Naive thymus-derived CD4-positive, alpha-beta T cell (primary cell): ENCODE measurements at regions of chr19 and their contacts with region 1.

Region 1: GRCh38 chr19:53195265-53195903 is 2.2 kb upstream of the ZNF665 start:
- DNase-seq: peak; percentile 39 to 86 (median 77)
- ATAC-seq: peak; percentile 53
- H3K4me3 ChIP-seq: no peak overlapping the region
- H3K4me3 Mint-ChIP-seq: peak overlapping the region; percentile 4 to 93 (median 64)
- H3K27ac ChIP-seq: no peak overlapping the region
- H3K27ac Mint-ChIP-seq: peak overlapping the region; percentile 30 to 96 (median 64)
- H3K4me1 ChIP-seq: peaks cover 9% of the 10 kb centered on the region in 2 donors
- H3K4me1 Mint-ChIP-seq: peaks cover 17 to 57% (median 46%) of the 10 kb centered on the region in 7 donors
- H3K27me3 ChIP-seq: no peaks in the 10 kb centered on the region
- H3K27me3 Mint-ChIP-seq: no peaks in the 10 kb centered on the region

Region 2: DNA sequence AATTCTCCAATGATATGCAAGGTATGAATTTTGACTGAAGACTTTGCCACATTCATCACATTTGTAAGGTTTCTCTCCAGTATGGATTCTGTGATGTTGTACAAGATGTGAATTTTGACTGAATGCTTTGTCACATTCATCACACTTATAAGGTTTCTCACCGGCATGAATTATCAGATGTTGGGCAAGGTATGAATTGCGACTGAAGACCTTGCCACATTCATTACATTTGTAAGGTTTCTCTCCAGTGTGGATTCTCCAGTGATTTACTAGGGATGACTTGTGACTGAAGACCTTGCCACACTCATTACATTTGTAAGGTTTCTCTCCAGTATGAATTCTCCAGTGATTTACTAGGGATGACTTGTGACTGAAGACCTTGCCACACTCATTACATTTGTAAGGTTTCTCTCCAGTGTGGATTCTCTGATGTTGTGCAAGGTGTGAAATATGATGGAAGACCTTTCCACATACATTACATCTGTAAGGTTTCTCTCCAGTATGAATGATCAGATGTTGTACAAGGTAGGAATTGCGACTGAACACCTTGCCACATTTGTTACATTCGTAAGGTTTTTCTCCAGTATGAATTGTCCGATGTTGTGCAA is 582.0 kb before region 1 on chr19:
- CTCF ChIA-PET with region 1: no interaction called
- POLR2A ChIA-PET with region 1: no interaction called
- intact Hi-C with region 1: no loop called
- DNase-seq: no peak
- ATAC-seq: no peak
- H3K4me3 ChIP-seq: no peak overlapping the region
- H3K4me3 Mint-ChIP-seq: no peak overlapping the region
- H3K27ac ChIP-seq: no peak overlapping the region
- H3K27ac Mint-ChIP-seq: no peak overlapping the region
- H3K4me1 ChIP-seq: no peaks in the 10 kb centered on the region
- H3K4me1 Mint-ChIP-seq: peaks cover 0 to 9% (median 0%) of the 10 kb centered on the region in 7 donors
- H3K27me3 ChIP-seq: no peaks in the 10 kb centered on the region
- H3K27me3 Mint-ChIP-seq: no peaks in the 10 kb centered on the region

Region 3: GRCh38 chr19:52637718-52638585 is 557.4 kb before region 1 on chr19 and contains the start of gene ZNF83:
- CTCF ChIA-PET with region 1: no interaction called
- POLR2A ChIA-PET with region 1: interaction called, 3 read pairs
- intact Hi-C with region 1: loop called in 1 of 2 experiments (anchors 5 kb)
- DNase-seq: peak; percentile 81 to 97 (median 92)
- ATAC-seq: peak; percentile 99
- H3K4me3 ChIP-seq: peak within 1 kb of the TSS; percentile 86
- H3K4me3 Mint-ChIP-seq: peak within 1 kb of the TSS; percentile 92 to 98 (median 95)
- H3K27ac ChIP-seq: peak within 1 kb of the TSS; percentile 99
- H3K27ac Mint-ChIP-seq: peak within 1 kb of the TSS; percentile 94 to 98 (median 97)
- H3K4me1 ChIP-seq: peaks cover 7 to 8% of the 10 kb centered on the region in 2 donors
- H3K4me1 Mint-ChIP-seq: peaks cover 11 to 27% (median 20%) of the 10 kb centered on the region in 7 donors
- H3K27me3 ChIP-seq: no peaks in the 10 kb centered on the region
- H3K27me3 Mint-ChIP-seq: no peaks in the 10 kb centered on the region
- total RNA-seq, gene ZNF83: 49.7 to 113 (median 70.5) TPM

Region 4: GRCh38 chr19:52993323-52994178 is 201.8 kb before region 1 on chr19:
- CTCF ChIA-PET with region 1: no interaction called
- POLR2A ChIA-PET with region 1: no interaction called
- intact Hi-C with region 1: loop called in 1 of 2 experiments (anchors 5 kb)
- DNase-seq: peak; percentile 49 to 85 (median 81)
- ATAC-seq: peak; percentile 100
- H3K4me3 ChIP-seq: peak overlapping the region; percentile 60
- H3K4me3 Mint-ChIP-seq: peak overlapping the region; percentile 56 to 92 (median 86)
- H3K27ac ChIP-seq: no peak overlapping the region
- H3K27ac Mint-ChIP-seq: peak overlapping the region in 5 of 9 donors; percentile 25 to 83 (median 54)
- H3K4me1 ChIP-seq: peaks cover 0 to 6% of the 10 kb centered on the region in 2 donors
- H3K4me1 Mint-ChIP-seq: peaks cover 8 to 26% (median 14%) of the 10 kb centered on the region in 7 donors
- H3K27me3 ChIP-seq: no peaks in the 10 kb centered on the region
- H3K27me3 Mint-ChIP-seq: peaks cover 0 to 23% (median 14%) of the 10 kb centered on the region in 5 donors

Region 5: GRCh38 chr19:53094749-53095575 is 100.4 kb before region 1 on chr19:
- CTCF ChIA-PET with region 1: no interaction called
- POLR2A ChIA-PET with region 1: no interaction called
- intact Hi-C with region 1: no loop called
- DNase-seq: no peak
- ATAC-seq: no peak
- H3K4me3 ChIP-seq: no peak overlapping the region
- H3K4me3 Mint-ChIP-seq: no peak overlapping the region
- H3K27ac ChIP-seq: no peak overlapping the region
- H3K27ac Mint-ChIP-seq: peak overlapping the region in 2 of 9 donors; percentile 52 to 73
- H3K4me1 ChIP-seq: no peaks in the 10 kb centered on the region
- H3K4me1 Mint-ChIP-seq: peaks cover 12 to 39% (median 28%) of the 10 kb centered on the region in 7 donors
- H3K27me3 ChIP-seq: no peaks in the 10 kb centered on the region
- H3K27me3 Mint-ChIP-seq: no peaks in the 10 kb centered on the region

Region 6: GRCh38 chr19:53365134-53365898 is 169.9 kb after region 1 on chr19 and contains the start of gene ZNF525:
- CTCF ChIA-PET with region 1: no interaction called
- POLR2A ChIA-PET with region 1: no interaction called
- intact Hi-C with region 1: loop called (anchors 1 kb)
- DNase-seq: peak; percentile 94 to 97 (median 96)
- ATAC-seq: peak; percentile 100
- H3K4me3 ChIP-seq: peak within 1 kb of the TSS; percentile 96
- H3K4me3 Mint-ChIP-seq: peak within 1 kb of the TSS; percentile 94 to 98 (median 96)
- H3K27ac ChIP-seq: peak within 1 kb of the TSS; percentile 80
- H3K27ac Mint-ChIP-seq: peak within 1 kb of the TSS; percentile 91 to 98 (median 94)
- H3K4me1 ChIP-seq: no peaks in the 10 kb centered on the region
- H3K4me1 Mint-ChIP-seq: peaks cover 12 to 35% (median 31%) of the 10 kb centered on the region in 7 donors
- H3K27me3 ChIP-seq: no peaks in the 10 kb centered on the region
- H3K27me3 Mint-ChIP-seq: no peaks in the 10 kb centered on the region
- total RNA-seq, gene ZNF525: 11.5 to 33.7 (median 24.2) TPM

Region 7: DNA sequence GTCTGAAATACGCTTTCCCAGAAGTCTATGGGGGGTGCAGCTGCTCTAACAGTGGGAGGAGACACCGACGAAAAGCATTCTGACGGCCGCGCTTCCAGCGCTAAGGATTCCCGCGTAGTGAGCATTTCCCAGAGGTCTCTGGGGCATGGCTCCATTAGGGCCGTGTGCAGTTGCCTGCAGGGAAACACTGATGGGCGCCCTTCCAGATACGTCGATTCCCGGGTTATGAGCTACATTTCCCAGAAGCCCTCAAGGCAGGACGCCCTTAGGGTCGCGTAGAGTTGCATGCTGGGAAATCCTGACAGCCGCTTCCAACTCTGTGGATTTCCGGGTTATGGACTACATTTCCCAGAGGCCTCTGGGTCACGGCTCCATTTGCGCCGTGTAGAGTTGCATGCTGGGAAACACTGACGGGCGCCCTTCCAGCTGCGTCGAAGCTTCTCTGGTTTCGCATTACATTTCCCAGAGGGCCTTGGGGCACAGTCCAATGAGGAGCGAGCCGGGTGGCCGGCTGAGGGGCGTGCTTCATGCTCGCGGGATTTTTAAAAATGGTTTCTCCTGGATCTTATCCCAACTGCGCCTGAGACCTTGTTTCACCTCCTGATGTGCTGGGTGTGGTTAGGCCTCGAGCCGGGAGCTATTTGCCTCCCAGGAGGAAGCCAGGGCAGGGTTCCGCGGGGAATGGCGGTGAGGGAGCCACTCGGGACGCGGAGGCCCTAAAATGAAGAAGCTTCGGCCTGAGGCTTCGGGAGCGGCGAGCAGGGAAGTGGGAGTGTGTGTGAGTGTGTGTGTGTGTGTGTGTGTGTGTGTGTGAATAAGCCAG is 325.4 kb after region 1 on chr19:
- CTCF ChIA-PET with region 1: interaction called, 3 read pairs
- POLR2A ChIA-PET with region 1: interaction called, 4 read pairs
- intact Hi-C with region 1: loop called (anchors 1 to 5 kb)
- DNase-seq: peak; percentile 65 to 93 (median 89)
- ATAC-seq: peak; percentile 100
- H3K4me3 ChIP-seq: peak overlapping the region; percentile 99
- H3K4me3 Mint-ChIP-seq: peak overlapping the region; percentile 94 to 99 (median 98)
- H3K27ac ChIP-seq: peak overlapping the region; percentile 69
- H3K27ac Mint-ChIP-seq: peak overlapping the region; percentile 84 to 96 (median 94)
- H3K4me1 ChIP-seq: peaks cover 9 to 10% of the 10 kb centered on the region in 2 donors
- H3K4me1 Mint-ChIP-seq: peaks cover 10 to 27% (median 18%) of the 10 kb centered on the region in 7 donors
- H3K27me3 ChIP-seq: no peaks in the 10 kb centered on the region
- H3K27me3 Mint-ChIP-seq: no peaks in the 10 kb centered on the region

Region 8: DNA sequence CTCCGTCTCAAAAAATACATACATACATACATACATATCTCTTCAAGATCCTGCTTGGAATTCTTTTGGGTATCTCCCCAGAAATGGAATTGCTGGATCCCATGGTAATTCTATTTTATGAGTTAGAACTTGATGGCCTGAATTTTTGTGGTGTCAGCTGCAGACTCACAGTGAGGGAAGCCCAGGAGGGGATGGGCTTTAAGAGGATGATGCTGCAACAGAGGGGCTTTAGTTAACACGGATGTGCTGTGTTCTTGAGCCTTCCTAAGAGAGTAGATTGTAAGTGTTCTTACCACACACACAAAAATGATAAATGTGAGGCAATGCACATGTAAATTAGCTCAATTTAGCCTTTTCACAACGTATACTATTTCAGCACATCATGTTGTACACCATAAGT is 827.8 kb after region 1 on chr19:
- CTCF ChIA-PET with region 1: interaction called, 5 read pairs
- POLR2A ChIA-PET with region 1: no interaction called
- intact Hi-C with region 1: loop called in 1 of 2 experiments (anchors 5 kb)
- DNase-seq: no peak
- ATAC-seq: no peak
- H3K4me3 ChIP-seq: no peak overlapping the region
- H3K4me3 Mint-ChIP-seq: no peak overlapping the region
- H3K27ac ChIP-seq: no peak overlapping the region
- H3K27ac Mint-ChIP-seq: no peak overlapping the region
- H3K4me1 ChIP-seq: no peaks in the 10 kb centered on the region
- H3K4me1 Mint-ChIP-seq: peaks cover 0 to 8% (median 0%) of the 10 kb centered on the region in 7 donors
- H3K27me3 ChIP-seq: peaks cover 0 to 3% of the 10 kb centered on the region in 2 donors
- H3K27me3 Mint-ChIP-seq: peaks cover 3 to 37% (median 29%) of the 10 kb centered on the region in 5 donors